ENCODE measurements at regions of chr17 and their contacts with region 1.

Region 1: DNA sequence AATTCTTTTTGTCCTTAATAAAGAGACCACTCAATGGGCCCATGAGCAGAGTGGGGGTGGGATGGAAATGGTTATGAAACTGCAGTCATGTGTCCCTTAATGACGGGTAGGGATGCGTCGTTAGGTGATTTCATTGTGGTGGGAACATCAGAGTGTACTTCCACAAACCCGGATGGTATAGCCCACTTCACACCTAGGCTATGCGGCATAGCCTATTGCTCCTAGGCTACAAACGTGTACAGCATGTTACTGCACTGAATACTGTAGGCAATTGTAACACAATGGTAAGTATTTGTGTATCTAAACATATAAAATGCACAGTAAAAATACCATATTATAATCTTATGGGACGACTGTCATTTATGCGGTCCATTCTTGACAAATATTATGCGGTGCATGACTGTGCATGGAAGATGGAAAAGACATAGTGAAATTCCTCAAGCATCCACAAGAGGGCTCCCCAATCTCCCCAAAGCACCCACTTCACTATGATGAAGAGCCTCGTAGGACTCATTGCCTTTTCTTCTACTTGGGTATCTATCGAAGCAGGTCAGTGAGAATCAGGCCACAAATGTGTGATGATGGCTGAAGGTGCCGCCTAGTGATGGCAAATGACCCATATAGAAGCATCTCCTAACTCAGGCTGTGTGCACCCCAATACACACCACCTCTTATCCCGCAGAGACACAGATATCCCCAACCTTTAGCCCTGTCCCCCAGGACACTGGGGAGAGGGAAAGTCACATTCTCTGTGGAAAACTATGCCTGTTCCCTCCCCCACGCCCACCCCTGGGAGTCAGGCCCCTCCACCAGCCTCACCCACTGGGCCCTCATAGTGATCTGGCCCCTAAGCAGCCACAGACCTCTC is 43.5 kb downstream of the TBX21 start:
- DNase-seq: peak; percentile 71 to 78
- ATAC-seq: peak; percentile 82 to 94
- H3K4me3 ChIP-seq: no peak overlapping the region
- H3K27ac ChIP-seq: no peak overlapping the region
- H3K4me1 ChIP-seq: no peaks in the 10 kb centered on the region
- CTCF ChIP-seq: peak; percentile 83
- EP300 ChIP-seq: no peak
- POLR2A ChIP-seq: no peak
- RAD21 ChIP-seq: peak; percentile 65 to 71

Region 2: DNA sequence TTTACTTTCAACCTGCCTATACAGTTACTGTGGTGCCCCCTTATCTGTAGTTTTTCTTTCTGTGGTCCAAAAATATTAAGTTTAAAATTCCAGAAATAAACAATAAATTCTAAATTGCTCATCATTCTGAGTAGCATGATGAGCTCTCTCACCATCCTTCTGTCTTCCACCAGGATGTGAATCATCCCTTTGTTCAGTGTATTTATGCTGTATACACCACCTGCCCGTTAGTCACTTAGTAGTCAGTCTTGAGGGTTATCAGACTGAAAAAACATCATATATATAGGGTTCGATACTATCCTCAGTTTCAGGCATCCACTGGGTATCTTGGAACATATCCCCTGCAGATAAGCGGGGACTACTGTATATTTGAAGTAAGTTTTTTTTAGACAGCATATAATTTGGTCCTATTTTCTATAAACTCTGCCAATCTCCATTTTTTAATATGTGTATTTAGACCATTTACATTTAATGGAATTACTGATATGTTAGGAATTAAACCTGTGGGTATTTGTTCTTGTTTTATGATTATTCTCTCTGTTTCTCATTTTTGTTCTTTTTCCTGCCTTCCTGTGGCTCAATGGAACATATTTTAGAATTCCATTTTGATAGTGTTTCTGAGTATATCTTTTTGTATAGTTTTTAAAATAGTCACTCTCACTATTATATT is 12.5 kb before region 1 on chr17:
- CTCF ChIA-PET with region 1: interaction called, 12 read pairs
- POLR2A ChIA-PET with region 1: no interaction called
- DNase-seq: no peak
- ATAC-seq: no peak
- H3K4me3 ChIP-seq: no peak overlapping the region
- H3K27ac ChIP-seq: no peak overlapping the region
- H3K4me1 ChIP-seq: no peaks in the 10 kb centered on the region
- CTCF ChIP-seq: no peak
- EP300 ChIP-seq: no peak
- POLR2A ChIP-seq: no peak
- RAD21 ChIP-seq: no peak

Region 3: GRCh38 chr17:47802341-47803022 is 25.9 kb after region 1 on chr17:
- CTCF ChIA-PET with region 1: interaction called, 42 read pairs
- POLR2A ChIA-PET with region 1: no interaction called
- DNase-seq: peak; percentile 77 to 92
- ATAC-seq: peak; percentile 91 to 95
- H3K4me3 ChIP-seq: no peak overlapping the region
- H3K27ac ChIP-seq: no peak overlapping the region
- H3K4me1 ChIP-seq: no peaks in the 10 kb centered on the region
- CTCF ChIP-seq: peak; percentile 84
- EP300 ChIP-seq: no peak
- POLR2A ChIP-seq: no peak
- RAD21 ChIP-seq: peak; percentile 89 to 90

Measured in A549 (cell line).